Cardiac septum (tissue), 1 donor: ENCODE measurements at regions of chr5 and their contacts with region 1.

Region 1: GRCh38 chr5:169302491-169303118 is 1.7 kb upstream of the SLIT3 start:
- DNase-seq: no peak

Region 2: DNA sequence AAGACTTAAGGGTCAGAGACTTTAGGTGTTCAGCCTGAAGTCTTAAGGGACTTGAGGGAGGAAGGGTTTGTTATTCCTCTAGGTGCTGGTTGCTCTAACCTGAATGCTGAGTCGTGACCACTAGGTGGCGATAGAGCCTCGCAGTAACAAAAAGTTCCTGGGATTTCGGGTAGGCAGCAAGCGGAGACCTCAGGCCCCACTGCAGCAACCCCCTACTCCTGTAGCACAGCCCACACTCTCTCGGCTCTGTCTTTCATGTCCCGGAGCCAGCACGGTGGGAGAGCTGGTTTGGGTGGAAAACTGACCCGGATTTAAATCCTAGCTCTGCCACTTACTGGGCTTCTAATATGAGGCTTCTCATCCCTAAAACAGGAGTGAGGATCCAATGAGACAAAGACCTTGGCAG is 623.1 kb before region 1 on chr5:
- intact Hi-C with region 1: loop called (anchors 2 kb)
- DNase-seq: no peak

Region 3: GRCh38 chr5:169116961-169117461 is 185.6 kb before region 1 on chr5:
- intact Hi-C with region 1: loop called (anchors 5 kb)
- DNase-seq: no peak

Region 4: GRCh38 chr5:169521366-169521983 is 218.9 kb after region 1 on chr5:
- intact Hi-C with region 1: no loop called
- DNase-seq: peak; percentile 77